IMR-90 (cell line): ENCODE measurements at regions of chr4 and their contacts with region 1.

Region 1: GRCh38 chr4:159240687-159241086 is 137.8 kb downstream of the RAPGEF2 start:
- DNase-seq: peak; percentile 60
- ATAC-seq: no peak
- H3K4me3 ChIP-seq: no peak overlapping the region
- H3K27ac ChIP-seq: no peak overlapping the region; the same call in 1 of the 2 replicates
- H3K4me1 ChIP-seq: no peaks in the 10 kb centered on the region
- H3K27me3 ChIP-seq: no peaks in the 10 kb centered on the region
- CTCF ChIP-seq: no peak
- POLR2A ChIP-seq: no peak
- RAD21 ChIP-seq: no peak

Region 2: DNA sequence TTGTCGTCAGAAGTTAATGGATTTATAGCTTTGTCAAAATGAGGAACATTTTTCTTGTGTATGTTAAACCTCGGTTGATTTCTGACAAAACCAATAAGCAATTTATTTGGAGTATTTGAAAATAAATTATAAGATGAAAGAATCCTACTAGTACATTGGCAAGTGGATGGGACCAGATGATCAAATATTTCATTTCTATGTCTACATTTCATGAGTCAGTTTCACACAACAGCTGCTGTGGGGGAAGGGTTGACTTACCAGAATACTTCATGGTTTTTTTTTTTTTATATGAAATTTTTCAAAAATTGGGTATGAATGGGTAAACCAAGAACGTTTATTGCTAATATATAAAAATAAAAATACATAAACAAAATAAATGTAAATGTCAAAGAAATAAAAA is 98.4 kb before region 1 on chr4:
- CTCF ChIA-PET with region 1: no interaction called
- POLR2A ChIA-PET with region 1: no interaction called
- dilution Hi-C with region 1: no loop called
- in situ Hi-C with region 1: no loop called
- intact Hi-C with region 1: no loop called
- DNase-seq: peak; percentile 64
- ATAC-seq: no peak
- H3K4me3 ChIP-seq: no peak overlapping the region
- H3K27ac ChIP-seq: no peak overlapping the region
- H3K4me1 ChIP-seq: peaks cover 12% of the 10 kb centered on the region
- H3K27me3 ChIP-seq: no peaks in the 10 kb centered on the region
- CTCF ChIP-seq: no peak
- POLR2A ChIP-seq: no peak
- RAD21 ChIP-seq: no peak

Region 3: GRCh38 chr4:159227984-159228383 is 12.7 kb before region 1 on chr4:
- CTCF ChIA-PET with region 1: no interaction called
- POLR2A ChIA-PET with region 1: interaction called, 10 read pairs
- dilution Hi-C with region 1: no loop called
- in situ Hi-C with region 1: no loop called
- intact Hi-C with region 1: no loop called
- DNase-seq: peak; percentile 92
- ATAC-seq: peak; percentile 74
- H3K4me3 ChIP-seq: peak overlapping the region; percentile 26
- H3K27ac ChIP-seq: peak overlapping the region; percentile 47
- H3K4me1 ChIP-seq: peaks cover 4% of the 10 kb centered on the region; the same call in 1 of the 2 replicates
- H3K27me3 ChIP-seq: no peaks in the 10 kb centered on the region
- CTCF ChIP-seq: 0 out of 2 replicates have a peak, but pooled peaks have one; percentile 19
- POLR2A ChIP-seq: peak; percentile 79; the same call in 1 of the 2 replicates
- RAD21 ChIP-seq: no peak

Region 4: DNA sequence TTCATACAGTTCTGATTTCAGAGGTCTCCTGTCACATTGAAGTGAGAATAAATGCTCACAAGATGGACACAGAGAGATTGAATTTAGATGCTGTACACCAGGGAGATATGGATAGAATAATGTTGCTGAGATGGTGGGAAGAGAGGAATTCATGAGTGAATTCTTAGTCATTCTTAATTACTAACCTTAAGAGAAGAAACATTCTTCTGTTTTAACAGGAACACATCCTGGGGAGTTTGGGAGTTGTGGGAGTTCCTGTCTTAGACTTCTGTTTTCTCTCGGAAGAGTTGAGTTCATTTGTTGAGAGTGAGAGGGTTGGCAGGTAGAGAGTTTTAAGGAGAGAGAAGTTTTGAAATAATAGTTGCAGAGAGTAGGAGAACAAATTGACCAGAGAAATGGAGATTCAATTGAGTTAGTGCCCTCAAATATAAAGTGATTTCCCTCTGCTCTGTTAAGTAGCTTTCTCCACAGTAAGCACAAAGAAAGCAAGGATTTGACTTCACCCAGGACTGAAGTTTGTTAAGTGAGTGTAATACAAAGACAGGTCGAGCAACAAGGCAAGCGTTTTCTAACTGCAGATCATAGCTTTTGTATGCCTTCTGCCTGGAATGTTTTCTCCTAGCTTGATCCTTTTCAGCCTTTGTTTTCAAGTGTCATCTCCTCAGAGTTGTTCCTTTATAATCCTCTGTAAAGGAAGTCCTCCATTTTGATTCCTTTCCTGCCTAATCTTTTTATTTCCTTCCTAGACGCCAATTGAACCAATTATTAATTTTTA is 68.1 kb after region 1 on chr4:
- CTCF ChIA-PET with region 1: no interaction called
- POLR2A ChIA-PET with region 1: no interaction called
- dilution Hi-C with region 1: no loop called
- in situ Hi-C with region 1: no loop called
- intact Hi-C with region 1: loop called (anchors 5 kb)
- DNase-seq: peak; percentile 62
- ATAC-seq: peak; percentile 83
- H3K4me3 ChIP-seq: no peak overlapping the region
- H3K27ac ChIP-seq: peak overlapping the region; percentile 65
- H3K4me1 ChIP-seq: peaks cover 5% of the 10 kb centered on the region; the same call in 1 of the 2 replicates
- H3K27me3 ChIP-seq: no peaks in the 10 kb centered on the region
- CTCF ChIP-seq: no peak
- POLR2A ChIP-seq: no peak
- RAD21 ChIP-seq: no peak